ENCODE measurements at regions of chr17 and their contacts with region 1.

Region 1: GRCh38 chr17:7851438-7852256 is 3.2 kb upstream of the TMEM88 start:
- DNase-seq: peak; percentile 95
- H3K4me3 Mint-ChIP-seq: peak overlapping the region; percentile 70
- H3K27ac Mint-ChIP-seq: peak overlapping the region; percentile 67
- H3K4me1 Mint-ChIP-seq: peaks cover 63% of the 10 kb centered on the region
- H3K27me3 Mint-ChIP-seq: no peaks in the 10 kb centered on the region

Region 2: DNA sequence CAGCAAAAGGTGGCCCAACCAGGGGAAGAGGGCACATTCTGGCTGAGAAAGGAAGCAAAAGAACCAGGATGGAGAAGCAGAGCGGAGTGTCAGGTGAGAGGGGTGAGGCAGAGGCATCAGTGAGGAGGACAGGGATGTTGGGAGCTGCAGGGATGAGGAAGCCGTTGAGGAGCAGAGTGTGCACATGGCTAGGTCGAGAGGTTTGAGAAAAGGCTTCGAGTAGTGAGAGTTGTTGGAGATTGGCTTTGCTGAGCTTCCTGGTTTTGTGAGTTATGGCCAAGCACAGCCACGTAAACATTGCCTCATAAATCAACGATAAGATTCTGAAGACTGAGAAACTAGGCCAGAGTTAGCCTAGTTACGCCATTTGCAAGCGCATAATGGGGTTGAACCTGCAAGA is 107.2 kb before region 1 on chr17:
- CTCF ChIA-PET with region 1: interaction called, 5 read pairs
- intact Hi-C with region 1: loop called (anchors 1 kb)
- DNase-seq: no peak
- H3K4me3 Mint-ChIP-seq: no peak overlapping the region
- H3K27ac Mint-ChIP-seq: no peak overlapping the region
- H3K4me1 Mint-ChIP-seq: no peaks in the 10 kb centered on the region
- H3K27me3 Mint-ChIP-seq: peaks cover 8% of the 10 kb centered on the region

Region 3: DNA sequence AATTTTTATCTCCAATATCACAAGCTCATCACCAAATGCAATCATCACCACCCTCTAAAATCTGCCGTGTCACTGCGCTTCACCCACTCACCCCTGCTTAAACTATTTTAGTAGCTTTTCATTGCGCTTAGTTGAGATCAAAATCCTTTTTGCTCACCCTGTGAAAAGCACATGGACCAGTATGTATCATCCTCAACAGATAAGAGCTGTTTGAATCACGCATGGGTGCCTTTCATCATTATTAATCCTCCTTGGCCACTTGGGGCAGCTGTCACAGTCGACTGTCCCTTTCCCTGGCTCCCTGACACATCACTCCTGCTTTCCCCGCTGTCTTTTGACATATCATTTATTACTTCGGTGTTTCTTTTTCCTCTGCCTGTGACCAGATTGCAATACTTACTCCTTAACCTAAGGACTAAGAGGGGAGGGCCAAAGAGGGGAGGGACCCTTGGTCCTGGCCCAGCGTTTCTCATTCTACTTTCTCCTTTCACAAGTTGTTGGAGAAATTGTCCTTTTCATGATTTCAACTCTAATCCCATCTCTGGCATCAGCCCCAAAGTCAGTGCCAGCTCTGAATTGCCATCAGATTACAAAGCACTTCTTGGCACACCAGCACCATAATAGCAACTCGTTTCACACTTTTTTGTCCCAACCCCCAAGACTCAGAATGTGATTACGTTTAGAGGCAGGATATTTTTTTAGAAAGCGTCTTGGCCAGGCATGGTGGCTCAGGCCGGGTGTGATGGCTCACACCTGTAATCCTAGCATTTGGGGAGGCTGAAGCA is 26.2 kb before region 1 on chr17:
- CTCF ChIA-PET with region 1: interaction called, 11 read pairs
- intact Hi-C with region 1: loop called (anchors 1 kb)
- DNase-seq: no peak
- H3K4me3 Mint-ChIP-seq: no peak overlapping the region
- H3K27ac Mint-ChIP-seq: no peak overlapping the region
- H3K4me1 Mint-ChIP-seq: no peaks in the 10 kb centered on the region
- H3K27me3 Mint-ChIP-seq: no peaks in the 10 kb centered on the region

Region 4: DNA sequence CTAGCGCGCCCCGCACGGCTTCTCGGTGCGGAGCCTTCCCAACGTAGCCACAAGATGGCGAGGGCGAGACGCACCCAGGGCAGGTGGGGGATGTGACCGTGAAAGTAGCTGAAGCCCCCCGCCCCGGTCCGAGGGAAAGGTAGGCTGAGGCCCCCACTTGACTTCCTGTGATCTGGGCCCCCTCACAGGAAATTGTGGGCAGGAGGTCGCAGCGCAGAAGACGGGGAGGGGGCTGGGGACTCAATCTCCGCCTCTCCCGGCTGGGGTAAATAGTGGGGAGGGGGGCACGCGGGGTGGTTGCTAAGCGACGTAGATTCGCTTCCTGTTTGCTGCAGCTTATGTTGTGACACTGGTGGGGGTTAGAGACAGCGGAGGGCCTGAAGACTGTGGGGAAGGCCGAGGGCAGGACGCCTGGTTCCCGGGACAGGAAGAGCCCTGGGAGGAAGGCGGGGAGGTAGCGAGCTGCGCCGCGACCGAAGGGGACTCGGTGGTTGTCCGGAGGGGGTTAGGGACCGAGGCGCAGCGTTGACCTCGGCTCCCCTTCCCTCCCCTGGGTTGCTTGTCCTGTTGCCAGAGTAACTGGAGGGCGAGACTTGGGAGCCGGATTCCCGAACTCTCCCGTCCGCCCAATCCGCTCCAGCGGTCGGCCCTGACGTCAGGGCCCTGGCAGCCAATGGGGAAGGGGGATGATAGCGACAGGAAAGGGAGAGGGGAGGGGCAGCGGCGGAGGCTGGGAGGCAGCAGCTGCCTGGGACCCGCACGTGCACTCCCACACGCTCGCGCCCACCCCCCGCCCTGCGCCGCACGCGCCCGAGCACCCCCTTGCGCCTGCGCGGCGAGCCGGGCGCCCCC is 16.5 kb before region 1 on chr17:
- CTCF ChIA-PET with region 1: interaction called, 20 read pairs
- intact Hi-C with region 1: loop called (anchors 1 kb)
- DNase-seq: peak; percentile 94
- H3K4me3 Mint-ChIP-seq: peak overlapping the region; percentile 93
- H3K27ac Mint-ChIP-seq: peak overlapping the region; percentile 94
- H3K4me1 Mint-ChIP-seq: peaks cover 44% of the 10 kb centered on the region
- H3K27me3 Mint-ChIP-seq: no peaks in the 10 kb centered on the region